ENCODE measurements at regions of chr18 and their contacts with region 1.

Region 1: DNA sequence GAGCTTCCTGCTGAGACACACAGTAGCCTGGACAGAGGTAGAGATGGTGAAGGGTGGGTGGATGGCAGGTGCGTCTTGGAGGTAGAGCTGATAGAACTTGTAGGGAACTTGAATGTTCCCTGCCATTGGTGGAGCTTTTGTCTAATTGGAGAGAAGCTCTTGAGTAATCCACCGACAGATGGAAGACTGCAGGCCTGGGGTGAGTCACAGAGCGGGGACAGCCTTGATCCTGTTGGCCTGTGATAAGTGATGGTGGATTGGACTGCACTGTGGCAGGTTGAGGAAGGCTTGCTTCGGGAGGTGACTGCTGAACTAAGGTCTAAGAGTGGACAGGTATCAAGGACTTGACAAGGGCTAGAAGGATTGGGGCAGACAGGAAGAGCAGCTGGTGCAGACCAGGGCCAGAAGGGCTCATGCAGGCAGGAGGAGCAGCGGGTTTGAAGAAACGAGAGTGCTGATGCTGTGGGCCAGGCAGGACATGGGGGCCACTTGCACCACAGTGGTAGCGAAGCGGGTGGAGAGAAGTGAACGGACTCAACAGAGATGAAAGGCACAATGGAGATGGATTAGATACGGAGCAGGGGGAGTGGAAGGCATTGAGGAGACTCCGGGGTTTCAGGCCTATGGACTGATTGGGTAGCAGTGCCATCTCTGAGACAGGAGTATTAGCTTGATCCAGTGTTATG is 16.3 kb downstream of the CABLES1 start:
- DNase-seq: peak in 1 of 10 donors; percentile 72

Region 2: DNA sequence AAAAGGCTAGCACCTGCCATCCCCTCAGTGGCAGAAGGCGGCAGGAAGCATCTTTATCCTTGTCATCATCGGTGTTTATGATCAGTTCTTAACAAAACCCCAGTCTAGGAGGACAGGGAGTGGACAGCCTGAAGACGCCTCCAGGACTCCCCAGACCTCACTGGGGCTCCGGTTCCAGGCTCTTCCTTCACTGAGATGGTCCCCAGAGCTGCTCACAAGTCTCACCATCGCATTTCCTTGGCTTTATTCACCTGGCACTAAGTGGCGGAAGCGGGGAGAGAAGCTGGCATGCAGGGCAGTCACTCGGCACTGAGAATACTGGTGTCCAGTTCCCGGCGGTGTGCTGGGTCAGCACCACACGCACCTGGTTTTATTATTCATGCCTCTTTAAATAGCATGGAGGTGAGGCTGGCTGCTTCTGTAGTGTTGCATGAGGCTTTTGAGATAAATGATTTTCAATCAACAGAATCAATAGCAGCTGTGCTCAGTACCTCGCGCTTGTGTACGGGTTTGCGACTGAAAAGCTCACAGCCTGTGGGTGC is 52.4 kb after region 1 on chr18:
- intact Hi-C with region 1: loop called (anchors 2 kb)
- DNase-seq: peak in 2 of 10 donors; percentile 46 to 65

Region 3: DNA sequence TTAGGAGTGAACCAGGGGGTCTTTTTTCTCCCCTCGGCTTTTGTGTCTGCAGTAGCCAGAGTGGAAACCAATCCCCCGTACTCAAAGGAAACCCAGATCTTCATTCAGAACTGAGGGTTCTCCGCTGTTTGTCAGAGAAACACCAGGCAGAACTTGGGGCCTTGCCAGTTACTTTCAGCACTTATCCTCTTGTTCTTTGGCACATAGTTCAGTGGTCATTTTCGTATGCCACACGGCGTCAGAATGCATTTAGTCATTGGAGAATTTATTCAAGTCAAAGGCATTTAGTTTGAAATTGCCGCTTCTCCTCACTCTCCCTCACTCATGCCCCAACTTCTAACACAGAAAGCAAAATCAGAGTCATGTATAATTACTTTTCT is 86.6 kb after region 1 on chr18:
- intact Hi-C with region 1: no loop called
- DNase-seq: peak in 4 of 10 donors; percentile 27 to 52 (median 32)

Measured in posterior cingulate gyrus (tissue), 11 donors.